Dorsolateral prefrontal cortex (tissue), 120 donors: ENCODE measurements at regions of chr16 and their contacts with region 1.

Region 1: GRCh38 chr16:51359141-51359955 is 208.3 kb upstream of the SALL1 start:
- DNase-seq: peak; percentile 9 to 89 (median 76)
- H3K4me3 ChIP-seq: peak overlapping the region in 5 of 59 donors; percentile 7 to 27 (median 14)
- H3K27ac ChIP-seq: peak overlapping the region in 58 of 59 donors; percentile 2 to 93 (median 81)
- H3K27me3 ChIP-seq: no peaks in the 10 kb centered on the region
- CTCF ChIP-seq: peak in 2 of 56 donors; percentile 7 to 20

Region 2: DNA sequence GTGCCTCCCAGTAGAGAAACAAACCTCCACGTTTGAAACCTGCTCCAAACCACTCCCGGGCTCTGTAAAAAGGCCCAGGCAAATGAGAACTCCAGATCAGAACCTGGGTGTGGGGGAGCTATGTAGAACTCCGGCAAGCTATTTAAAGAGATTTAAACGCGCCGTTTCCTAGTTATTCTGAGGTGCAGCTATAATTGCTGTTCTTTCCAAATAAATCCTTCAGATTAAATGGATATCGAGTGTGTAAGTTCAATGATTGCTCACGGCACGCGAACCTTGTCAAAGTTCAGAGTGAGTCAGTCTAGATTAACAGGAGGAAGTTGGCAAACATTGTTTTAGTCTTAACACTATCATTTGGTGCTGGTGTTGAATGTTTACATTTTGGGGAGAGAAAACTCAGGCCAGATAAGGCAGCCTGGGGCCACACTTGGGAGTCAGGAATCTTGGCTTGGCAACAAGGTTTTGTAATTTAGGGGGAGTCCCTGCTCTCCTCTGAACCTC is 115.4 kb before region 1 on chr16:
- intact Hi-C with region 1: loop called in 1 of 2 experiments (anchors 10 kb)
- DNase-seq: no peak
- H3K4me3 ChIP-seq: no peak overlapping the region
- H3K27ac ChIP-seq: no peak overlapping the region
- H3K27me3 ChIP-seq: no peaks in the 10 kb centered on the region
- CTCF ChIP-seq: no peak

Region 3: GRCh38 chr16:51268237-51268636 is 91.1 kb before region 1 on chr16:
- intact Hi-C with region 1: loop called in 1 of 2 experiments (anchors 5 kb)
- DNase-seq: peak in 9 of 10 donors; percentile 32 to 79 (median 61)
- H3K4me3 ChIP-seq: peak overlapping the region in 34 of 59 donors; percentile 1 to 58 (median 23)
- H3K27ac ChIP-seq: peak overlapping the region in 58 of 59 donors; percentile 21 to 98 (median 89)
- H3K27me3 ChIP-seq: peaks cover 0 to 3% (median 0%) of the 10 kb centered on the region in 45 donors
- CTCF ChIP-seq: no peak

Region 4: GRCh38 chr16:51392521-51393187 is 33.3 kb after region 1 on chr16:
- intact Hi-C with region 1: no loop called
- DNase-seq: no peak
- H3K4me3 ChIP-seq: no peak overlapping the region
- H3K27ac ChIP-seq: no peak overlapping the region
- H3K27me3 ChIP-seq: peaks cover 0 to 16% (median 0%) of the 10 kb centered on the region in 45 donors
- CTCF ChIP-seq: no peak

Region 5: GRCh38 chr16:51431517-51432241 is 72.3 kb after region 1 on chr16:
- intact Hi-C with region 1: loop called (anchors 5 kb)
- DNase-seq: peak in 5 of 10 donors; percentile 33 to 71 (median 53)
- H3K4me3 ChIP-seq: peak overlapping the region in 13 of 59 donors; percentile 7 to 51 (median 27)
- H3K27ac ChIP-seq: peak overlapping the region in 53 of 59 donors; percentile 4 to 90 (median 67)
- H3K27me3 ChIP-seq: peaks cover 0 to 13% (median 0%) of the 10 kb centered on the region in 45 donors
- CTCF ChIP-seq: no peak

Region 6: GRCh38 chr16:51440131-51440889 is 81.0 kb after region 1 on chr16:
- intact Hi-C with region 1: loop called in 1 of 2 experiments (anchors 5 kb)
- DNase-seq: peak in 2 of 10 donors; percentile 33 to 35
- H3K4me3 ChIP-seq: peak overlapping the region in 52 of 59 donors; percentile 1 to 58 (median 29)
- H3K27ac ChIP-seq: peak overlapping the region; percentile 60 to 95 (median 88)
- H3K27me3 ChIP-seq: peaks cover 0 to 37% (median 0%) of the 10 kb centered on the region in 45 donors
- CTCF ChIP-seq: peak in 1 of 56 donors; percentile 3

Region 7: DNA sequence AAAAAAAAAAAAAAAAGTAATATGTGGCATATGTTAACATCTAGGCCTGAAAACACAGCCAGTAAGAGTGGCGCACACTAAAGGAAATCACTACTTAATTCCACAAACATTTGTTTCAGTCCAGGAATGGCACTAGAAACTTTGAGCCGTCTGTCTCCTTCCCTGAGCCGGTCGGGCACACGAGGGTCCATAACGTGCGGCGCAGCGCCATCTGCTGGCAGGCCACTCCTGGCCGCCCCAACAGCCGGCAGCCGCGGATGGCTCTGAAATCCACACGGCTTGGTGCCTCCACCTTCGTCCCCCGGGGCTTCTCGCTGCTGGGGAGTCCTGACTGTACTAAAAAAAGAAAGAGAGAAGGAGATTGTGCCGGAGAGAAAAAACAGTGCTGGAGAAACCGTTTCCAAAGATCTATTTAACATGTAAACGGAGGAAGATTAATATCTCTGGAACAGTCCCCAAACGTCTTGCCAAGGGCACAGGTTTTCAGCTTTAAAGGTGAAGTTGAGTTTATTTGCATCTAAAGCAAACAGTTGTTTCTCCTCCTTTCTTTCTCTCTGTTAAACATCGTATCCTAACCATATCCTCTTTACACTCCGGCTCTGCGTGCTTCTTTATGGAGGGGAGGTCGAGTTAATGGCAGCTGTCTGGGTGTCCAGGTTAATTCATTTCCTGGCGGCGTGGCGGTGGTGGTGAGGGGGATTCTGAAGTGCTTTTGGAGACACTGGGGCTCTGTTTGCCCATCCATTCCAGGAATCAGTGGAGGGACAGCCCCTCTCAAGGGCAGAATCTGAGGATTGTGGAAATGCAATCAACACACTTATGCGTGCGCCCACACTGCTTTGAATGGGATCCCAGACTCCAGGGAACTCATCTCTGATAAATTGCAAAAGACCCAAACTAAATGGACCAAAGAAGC is 403.0 kb after region 1 on chr16:
- intact Hi-C with region 1: loop called in 1 of 2 experiments (anchors 10 kb)
- DNase-seq: peak; percentile 26 to 90 (median 85)
- H3K4me3 ChIP-seq: peak overlapping the region in 44 of 59 donors; percentile 5 to 61 (median 38)
- H3K27ac ChIP-seq: peak overlapping the region in 4 of 59 donors; percentile 20 to 34 (median 30)
- H3K27me3 ChIP-seq: peaks cover 0 to 32% (median 3%) of the 10 kb centered on the region in 45 donors
- CTCF ChIP-seq: peak; percentile 83 to 99 (median 95)